ENCODE measurements at regions of chr18 and their contacts with region 1.

Region 1: GRCh38 chr18:23623040-23623439 is 36.7 kb upstream of the NPC1 start:
- DNase-seq: no peak
- H3K4me3 ChIP-seq: no peak overlapping the region
- H3K27ac ChIP-seq: no peak overlapping the region
- H3K4me1 ChIP-seq: peaks cover 21 to 44% (median 32%) of the 10 kb centered on the region in 4 donors
- H3K27me3 ChIP-seq: peaks cover 0 to 20% (median 0%) of the 10 kb centered on the region in 3 donors
- CTCF ChIP-seq: no peak
- EP300 ChIP-seq: no peak
- POLR2A ChIP-seq: no peak

Region 2: DNA sequence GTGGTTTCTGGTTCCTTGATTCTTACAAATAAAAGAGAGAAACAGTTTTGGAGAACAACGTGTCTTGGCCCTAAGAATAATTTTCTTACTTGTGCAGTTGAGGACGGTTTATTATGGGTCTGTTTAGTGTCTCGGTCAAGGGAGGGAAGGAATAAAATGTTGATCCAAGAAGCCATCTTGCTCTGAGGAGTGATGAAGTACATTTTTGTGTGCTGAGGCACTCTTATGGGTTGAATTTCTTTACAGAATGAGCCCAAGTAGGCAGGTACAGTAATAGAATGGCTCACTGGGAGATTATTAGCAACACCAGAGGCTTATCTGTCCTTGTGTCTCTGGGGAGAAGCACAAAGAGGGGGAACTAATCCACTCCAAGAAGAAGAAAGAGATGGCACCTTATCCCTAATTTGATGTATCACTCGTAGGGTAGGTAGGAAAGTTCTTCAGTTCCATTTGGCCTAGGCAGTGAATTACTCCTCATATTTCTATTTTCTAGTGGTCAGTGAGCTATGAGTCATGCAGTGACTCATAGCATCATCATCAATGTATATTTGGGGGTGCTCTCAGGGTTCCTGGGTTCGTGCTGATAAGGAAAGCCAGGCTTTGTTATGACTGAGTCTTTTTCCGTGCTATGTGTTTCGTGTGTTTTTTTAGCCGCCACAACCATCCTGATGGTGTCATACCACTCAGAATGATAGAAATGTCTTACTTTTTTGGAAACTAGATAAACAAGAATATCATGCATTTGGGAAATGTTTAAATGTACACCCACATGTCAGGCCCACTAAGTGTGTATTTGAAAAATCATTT is 955.2 kb before region 1 on chr18:
- intact Hi-C with region 1: no loop called
- DNase-seq: peak in 1 of 2 donors; percentile 72
- H3K4me3 ChIP-seq: no peak overlapping the region
- H3K27ac ChIP-seq: peak overlapping the region in 2 of 5 donors; percentile 28 to 68
- H3K4me1 ChIP-seq: peaks cover 0 to 32% (median 18%) of the 10 kb centered on the region in 4 donors
- H3K27me3 ChIP-seq: no peaks in the 10 kb centered on the region
- CTCF ChIP-seq: no peak
- EP300 ChIP-seq: no peak
- POLR2A ChIP-seq: no peak

Region 3: GRCh38 chr18:23437357-23438045 is 185.5 kb before region 1 on chr18:
- intact Hi-C with region 1: no loop called
- DNase-seq: peak; percentile 85 to 93
- H3K4me3 ChIP-seq: peak overlapping the region; percentile 58 to 89 (median 79)
- H3K27ac ChIP-seq: peak overlapping the region; percentile 44 to 75 (median 68)
- H3K4me1 ChIP-seq: peaks cover 7 to 26% (median 14%) of the 10 kb centered on the region in 4 donors
- H3K27me3 ChIP-seq: no peaks in the 10 kb centered on the region
- CTCF ChIP-seq: no peak
- EP300 ChIP-seq: no peak
- POLR2A ChIP-seq: no peak

Region 4: DNA sequence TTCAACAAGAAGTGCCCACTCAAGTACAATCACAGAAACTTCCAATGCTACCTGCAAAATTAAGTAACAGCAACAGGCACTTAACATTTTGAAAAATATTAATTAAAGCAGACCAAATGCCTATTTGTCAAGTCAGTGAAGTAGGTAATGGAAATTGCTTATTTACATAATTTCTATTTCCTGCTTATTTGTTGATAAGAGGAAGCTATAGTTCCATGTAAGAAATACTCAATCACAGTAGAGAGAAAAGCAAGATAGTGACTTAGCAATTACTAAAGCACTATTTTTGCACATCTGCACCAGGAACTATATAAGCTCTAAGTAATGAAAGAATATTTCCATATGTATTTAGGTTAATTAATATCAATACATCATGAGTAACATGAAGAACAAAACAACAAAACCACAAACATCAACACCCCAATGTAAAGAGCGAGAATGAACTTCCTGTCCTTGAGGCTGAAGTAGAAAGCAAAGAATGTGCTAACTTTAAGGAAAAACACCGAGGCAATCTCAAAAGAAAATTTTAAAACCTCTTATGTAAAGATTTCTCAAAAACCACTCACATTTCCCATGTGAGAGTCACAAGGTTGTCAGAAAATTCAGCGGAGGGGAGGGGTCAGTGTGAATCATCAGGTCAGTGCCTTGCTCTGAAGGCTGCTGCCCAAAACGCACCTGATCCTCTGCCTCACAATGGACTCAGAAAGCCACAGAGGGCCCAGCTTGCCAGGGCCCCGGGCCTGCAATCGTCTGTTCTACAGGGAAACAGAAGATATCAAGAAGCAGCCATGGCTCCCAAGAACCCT is 49.2 kb before region 1 on chr18:
- intact Hi-C with region 1: no loop called
- DNase-seq: no peak
- H3K4me3 ChIP-seq: no peak overlapping the region
- H3K27ac ChIP-seq: peak overlapping the region; percentile 56 to 70 (median 63)
- H3K4me1 ChIP-seq: peaks cover 25 to 51% (median 35%) of the 10 kb centered on the region in 4 donors
- H3K27me3 ChIP-seq: no peaks in the 10 kb centered on the region
- CTCF ChIP-seq: no peak
- EP300 ChIP-seq: no peak
- POLR2A ChIP-seq: no peak

Region 5: GRCh38 chr18:23812546-23813440 is 189.8 kb after region 1 on chr18:
- intact Hi-C with region 1: loop called (anchors 5 kb)
- DNase-seq: peak in 1 of 2 donors; percentile 42
- H3K4me3 ChIP-seq: no peak overlapping the region
- H3K27ac ChIP-seq: no peak overlapping the region
- H3K4me1 ChIP-seq: no peaks in the 10 kb centered on the region
- H3K27me3 ChIP-seq: no peaks in the 10 kb centered on the region
- CTCF ChIP-seq: peak in 5 of 7 experiments; percentile 34 to 52 (median 36)
- EP300 ChIP-seq: no peak
- POLR2A ChIP-seq: no peak

Measured in stomach (tissue), 19 donors.